CD4-positive, alpha-beta memory T cell (primary cell): ENCODE measurements at regions of chr1 and their contacts with region 1.

Region 1: GRCh38 chr1:156383023-156383422 is 14.0 kb downstream of the RHBG start:
- DNase-seq: peak; percentile 37 to 58 (median 44)
- H3K4me3 ChIP-seq: no peak overlapping the region
- H3K4me3 Mint-ChIP-seq: no peak overlapping the region
- H3K27ac ChIP-seq: no peak overlapping the region
- H3K27ac Mint-ChIP-seq: no peak overlapping the region
- H3K4me1 ChIP-seq: peaks cover 6% of the 10 kb centered on the region
- H3K4me1 Mint-ChIP-seq: peaks cover 4 to 14% (median 7%) of the 10 kb centered on the region in 4 donors
- H3K27me3 ChIP-seq: no peaks in the 10 kb centered on the region
- H3K27me3 Mint-ChIP-seq: peaks cover 7 to 12% of the 10 kb centered on the region in 2 donors

Region 2: GRCh38 chr1:156356875-156357534 is 26.0 kb before region 1 on chr1:
- CTCF ChIA-PET with region 1: interaction called, 14 read pairs
- POLR2A ChIA-PET with region 1: no interaction called
- intact Hi-C with region 1: no loop called
- DNase-seq: peak; percentile 43 to 69 (median 61)
- H3K4me3 ChIP-seq: no peak overlapping the region
- H3K4me3 Mint-ChIP-seq: peak overlapping the region in 2 of 8 donors; percentile 26 to 46
- H3K27ac ChIP-seq: no peak overlapping the region
- H3K27ac Mint-ChIP-seq: no peak overlapping the region
- H3K4me1 ChIP-seq: peaks cover 6% of the 10 kb centered on the region
- H3K4me1 Mint-ChIP-seq: peaks cover 4 to 7% (median 5%) of the 10 kb centered on the region in 4 donors
- H3K27me3 ChIP-seq: peaks cover 4% of the 10 kb centered on the region
- H3K27me3 Mint-ChIP-seq: peaks cover 8 to 19% of the 10 kb centered on the region in 2 donors

Region 3: DNA sequence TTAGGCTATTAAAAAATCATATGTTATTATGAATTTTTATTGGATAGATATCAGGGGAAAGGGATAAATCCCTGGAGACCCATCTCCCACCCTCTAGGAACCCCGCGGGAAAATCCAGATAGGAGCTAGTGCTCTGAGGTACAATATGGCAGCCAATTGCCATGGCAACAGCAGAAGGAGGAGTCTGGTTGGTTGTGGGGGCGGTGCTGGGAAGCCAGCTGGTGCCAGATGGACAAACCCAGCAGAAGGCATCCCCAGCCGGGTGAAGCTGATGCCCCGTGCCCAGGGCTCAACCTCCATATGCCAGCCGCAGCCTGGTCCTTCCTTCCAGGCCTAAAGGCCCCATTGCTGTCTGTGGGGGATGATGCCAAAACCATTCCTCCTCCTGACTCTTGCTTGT is 24.3 kb after region 1 on chr1:
- CTCF ChIA-PET with region 1: interaction called, 24 read pairs
- POLR2A ChIA-PET with region 1: no interaction called
- intact Hi-C with region 1: no loop called
- DNase-seq: no peak
- H3K4me3 ChIP-seq: no peak overlapping the region
- H3K4me3 Mint-ChIP-seq: no peak overlapping the region
- H3K27ac ChIP-seq: no peak overlapping the region
- H3K27ac Mint-ChIP-seq: no peak overlapping the region
- H3K4me1 ChIP-seq: no peaks in the 10 kb centered on the region
- H3K4me1 Mint-ChIP-seq: no peaks in the 10 kb centered on the region
- H3K27me3 ChIP-seq: no peaks in the 10 kb centered on the region
- H3K27me3 Mint-ChIP-seq: peaks cover 20 to 31% of the 10 kb centered on the region in 2 donors

Region 4: DNA sequence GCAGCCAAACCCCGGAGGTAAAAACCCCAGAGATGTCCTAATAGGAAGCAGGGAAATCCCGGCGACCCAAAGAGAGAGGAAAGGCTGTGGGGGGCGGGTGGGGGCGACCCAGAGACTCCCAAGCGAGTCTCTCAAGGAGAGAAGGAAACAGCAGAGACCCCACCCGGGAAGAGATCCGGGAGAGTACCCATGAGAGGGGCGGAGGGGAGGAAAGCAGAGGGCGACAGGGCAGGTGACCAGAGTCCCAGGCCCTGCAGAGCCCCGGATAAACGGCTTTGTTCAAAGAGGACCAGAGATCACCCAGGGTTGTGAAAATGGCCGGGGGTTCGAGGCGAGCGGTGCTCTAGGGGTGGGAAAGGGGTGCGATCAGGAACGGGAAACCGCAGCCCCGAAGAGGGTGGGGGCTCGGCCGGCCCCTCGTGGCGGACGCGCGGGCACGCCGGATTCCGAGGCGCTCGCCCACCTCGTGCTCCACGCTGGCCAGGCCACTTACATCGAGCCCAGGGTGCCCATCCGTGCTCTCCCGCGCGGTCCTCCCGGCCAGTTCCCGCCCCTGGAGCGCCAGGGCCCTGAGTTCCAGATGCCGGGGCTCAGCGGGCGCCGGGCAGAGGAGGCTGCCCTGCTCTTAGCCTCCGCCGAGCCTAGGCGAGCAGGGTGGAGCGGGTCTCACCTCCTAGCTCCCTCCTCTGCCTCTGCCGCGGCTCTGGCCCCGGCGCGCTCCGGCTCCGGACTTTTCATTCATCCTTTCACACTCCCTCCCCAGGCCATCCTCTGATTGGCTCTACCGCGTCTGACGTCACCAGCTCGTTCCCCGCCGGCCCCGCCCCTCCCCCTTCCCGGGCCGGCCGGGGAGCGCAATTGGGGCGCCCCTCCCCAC is 38.3 kb after region 1 on chr1:
- CTCF ChIA-PET with region 1: interaction called, 25 read pairs
- POLR2A ChIA-PET with region 1: interaction called, 5 read pairs
- intact Hi-C with region 1: no loop called
- DNase-seq: peak; percentile 54 to 70 (median 63)
- H3K4me3 ChIP-seq: peak overlapping the region; percentile 23 to 71
- H3K4me3 Mint-ChIP-seq: peak overlapping the region; percentile 88 to 99 (median 90)
- H3K27ac ChIP-seq: no peak overlapping the region
- H3K27ac Mint-ChIP-seq: peak overlapping the region; percentile 17 to 83 (median 52)
- H3K4me1 ChIP-seq: peaks cover 33% of the 10 kb centered on the region
- H3K4me1 Mint-ChIP-seq: peaks cover 13 to 37% (median 23%) of the 10 kb centered on the region in 4 donors
- H3K27me3 ChIP-seq: peaks cover 47% of the 10 kb centered on the region
- H3K27me3 Mint-ChIP-seq: peaks cover 31 to 43% of the 10 kb centered on the region in 2 donors

Region 5: DNA sequence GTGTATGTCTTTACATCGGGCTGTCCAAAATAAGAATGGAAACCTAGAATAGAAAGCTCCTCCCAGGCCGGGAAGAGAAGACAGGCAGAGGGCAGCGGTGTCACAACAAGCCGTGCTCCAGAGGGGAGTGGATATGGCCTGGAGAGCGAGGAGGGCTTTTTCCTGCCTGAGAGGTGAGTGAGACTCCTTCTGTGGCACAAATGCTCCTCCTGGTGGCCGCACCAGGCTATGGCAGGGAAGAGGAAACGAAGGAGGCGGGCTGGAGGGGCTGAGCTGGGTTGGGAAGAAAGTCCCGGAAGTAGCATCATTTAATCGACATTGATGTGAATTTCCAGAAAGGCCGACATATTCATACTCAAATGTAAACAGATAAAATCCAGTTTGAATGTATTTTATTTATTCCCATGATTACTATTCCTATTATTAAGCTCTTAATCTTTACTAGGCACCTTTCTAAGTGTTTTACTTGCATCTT is 62.8 kb after region 1 on chr1:
- CTCF ChIA-PET with region 1: interaction called, 303 read pairs
- POLR2A ChIA-PET with region 1: interaction called, 37 read pairs
- intact Hi-C with region 1: loop called (anchors 1 kb)
- DNase-seq: peak; percentile 71 to 80 (median 74)
- H3K4me3 ChIP-seq: no peak overlapping the region
- H3K4me3 Mint-ChIP-seq: peak overlapping the region in 2 of 8 donors; percentile 43 to 60
- H3K27ac ChIP-seq: no peak overlapping the region
- H3K27ac Mint-ChIP-seq: peak overlapping the region in 2 of 7 donors; percentile 28 to 63
- H3K4me1 ChIP-seq: peaks cover 6% of the 10 kb centered on the region
- H3K4me1 Mint-ChIP-seq: peaks cover 3 to 8% (median 7%) of the 10 kb centered on the region in 4 donors
- H3K27me3 ChIP-seq: peaks cover 23% of the 10 kb centered on the region
- H3K27me3 Mint-ChIP-seq: peaks cover 42 to 44% of the 10 kb centered on the region in 2 donors

Region 6: GRCh38 chr1:156480411-156481192 is 97.6 kb after region 1 on chr1:
- CTCF ChIA-PET with region 1: interaction called, 10 read pairs
- POLR2A ChIA-PET with region 1: interaction called, 4 read pairs
- intact Hi-C with region 1: no loop called
- DNase-seq: peak; percentile 77 to 81 (median 80)
- H3K4me3 ChIP-seq: no peak overlapping the region
- H3K4me3 Mint-ChIP-seq: peak overlapping the region in 6 of 8 donors; percentile 33 to 58 (median 46)
- H3K27ac ChIP-seq: peak overlapping the region; percentile 42
- H3K27ac Mint-ChIP-seq: peak overlapping the region; percentile 75 to 97 (median 92)
- H3K4me1 ChIP-seq: peaks cover 47% of the 10 kb centered on the region
- H3K4me1 Mint-ChIP-seq: peaks cover 31 to 53% (median 44%) of the 10 kb centered on the region in 4 donors
- H3K27me3 ChIP-seq: no peaks in the 10 kb centered on the region
- H3K27me3 Mint-ChIP-seq: no peaks in the 10 kb centered on the region

Region 7: GRCh38 chr1:156608036-156608674 is 225.1 kb after region 1 on chr1:
- CTCF ChIA-PET with region 1: interaction called, 41 read pairs
- POLR2A ChIA-PET with region 1: interaction called, 3 read pairs
- intact Hi-C with region 1: no loop called
- DNase-seq: peak; percentile 68 to 75 (median 71)
- H3K4me3 ChIP-seq: no peak overlapping the region
- H3K4me3 Mint-ChIP-seq: no peak overlapping the region
- H3K27ac ChIP-seq: no peak overlapping the region
- H3K27ac Mint-ChIP-seq: peak overlapping the region in 2 of 7 donors; percentile 5 to 46
- H3K4me1 ChIP-seq: peaks cover under 1% of the 10 kb centered on the region
- H3K4me1 Mint-ChIP-seq: peaks cover 2 to 9% (median 7%) of the 10 kb centered on the region in 4 donors
- H3K27me3 ChIP-seq: no peaks in the 10 kb centered on the region
- H3K27me3 Mint-ChIP-seq: peaks cover 7% of the 10 kb centered on the region in 2 donors